ENCODE measurements at regions of chr10 and their contacts with region 1.

Region 1: DNA sequence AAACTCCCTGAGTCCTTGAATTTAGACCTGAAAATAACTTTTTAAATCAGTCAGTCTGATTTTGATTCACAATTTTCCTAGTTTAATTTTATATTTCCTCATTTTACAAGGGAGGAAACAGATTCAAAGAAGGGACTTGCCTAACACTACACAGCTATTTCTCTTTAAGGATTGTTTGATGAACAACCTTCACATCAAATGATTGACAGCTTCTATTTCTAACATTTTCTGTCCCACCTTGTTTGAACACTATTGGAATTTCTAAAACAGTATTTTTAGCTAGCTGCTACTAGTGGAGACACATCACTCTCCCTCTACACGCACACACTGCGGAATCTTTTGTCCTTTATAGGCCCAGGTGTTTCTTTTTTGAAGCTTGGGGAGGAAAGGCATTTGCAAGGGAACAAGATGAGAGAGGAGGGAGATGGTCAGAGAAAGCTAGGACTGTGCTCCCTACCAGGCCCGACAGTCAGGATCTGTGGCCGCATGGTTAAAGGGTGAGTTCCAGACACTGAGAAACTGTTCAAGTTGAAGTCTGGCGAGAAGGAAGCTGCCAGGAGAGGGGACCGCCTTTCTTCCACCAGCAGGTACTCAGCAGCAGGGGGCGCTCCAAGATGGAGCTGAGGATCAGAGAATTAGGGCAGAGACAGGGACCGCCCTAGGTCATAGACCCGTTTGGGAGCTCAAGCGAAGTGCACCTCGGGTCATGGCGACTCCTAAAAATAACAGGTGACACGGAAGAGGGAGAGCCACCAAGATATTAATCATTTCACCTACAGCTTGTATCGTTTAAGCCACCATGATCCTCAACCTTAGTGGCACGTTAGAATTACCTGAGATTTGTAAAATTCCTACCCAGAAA is 49.7 kb downstream of the DNAJC12 start:
- DNase-seq: peak; percentile 65
- H3K4me3 Mint-ChIP-seq: peak overlapping the region; percentile 70
- H3K27ac Mint-ChIP-seq: peak overlapping the region; percentile 89
- H3K4me1 Mint-ChIP-seq: peaks cover 53% of the 10 kb centered on the region
- H3K27me3 Mint-ChIP-seq: no peaks in the 10 kb centered on the region

Region 2: DNA sequence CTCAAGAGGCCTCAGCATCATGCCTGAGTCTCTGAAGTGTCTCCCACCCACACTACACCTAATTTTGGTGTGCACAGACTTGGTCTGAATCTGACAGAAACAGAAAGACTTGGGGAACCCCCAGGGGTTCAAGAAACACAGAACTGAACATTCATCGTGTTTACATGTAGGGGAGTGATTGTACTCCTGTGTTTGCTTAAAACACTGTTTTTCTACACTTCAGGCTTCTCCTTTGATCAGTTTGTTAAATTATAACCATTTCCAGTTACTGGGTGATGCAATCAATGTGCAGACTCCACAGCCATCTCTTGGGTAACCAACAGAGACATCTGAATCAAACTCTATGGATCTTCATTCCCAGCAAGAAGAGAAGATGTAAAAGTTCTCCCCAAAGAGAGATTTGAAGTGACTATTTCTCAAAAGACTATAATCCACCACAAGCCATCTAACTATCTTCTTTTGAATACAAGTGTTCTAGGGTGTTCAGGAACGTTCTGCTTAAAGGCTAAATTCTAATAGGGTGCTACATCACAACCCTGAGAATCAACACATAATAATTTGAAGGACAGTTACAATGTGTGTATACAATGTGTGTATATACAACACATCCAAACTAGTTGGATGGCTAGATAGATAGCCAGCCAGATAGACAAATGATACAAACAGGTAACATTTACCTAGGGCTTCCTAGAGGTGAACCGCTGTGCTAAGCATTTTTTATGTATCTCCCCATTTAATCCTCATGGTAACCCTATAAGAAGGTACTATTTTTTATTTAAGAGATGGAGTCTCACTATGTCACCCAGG is 15.5 kb after region 1 on chr10:
- intact Hi-C with region 1: loop called (anchors 1 kb)
- DNase-seq: no peak
- H3K4me3 Mint-ChIP-seq: no peak overlapping the region
- H3K27ac Mint-ChIP-seq: peak overlapping the region; percentile 78
- H3K4me1 Mint-ChIP-seq: peaks cover 25% of the 10 kb centered on the region
- H3K27me3 Mint-ChIP-seq: no peaks in the 10 kb centered on the region

Region 3: DNA sequence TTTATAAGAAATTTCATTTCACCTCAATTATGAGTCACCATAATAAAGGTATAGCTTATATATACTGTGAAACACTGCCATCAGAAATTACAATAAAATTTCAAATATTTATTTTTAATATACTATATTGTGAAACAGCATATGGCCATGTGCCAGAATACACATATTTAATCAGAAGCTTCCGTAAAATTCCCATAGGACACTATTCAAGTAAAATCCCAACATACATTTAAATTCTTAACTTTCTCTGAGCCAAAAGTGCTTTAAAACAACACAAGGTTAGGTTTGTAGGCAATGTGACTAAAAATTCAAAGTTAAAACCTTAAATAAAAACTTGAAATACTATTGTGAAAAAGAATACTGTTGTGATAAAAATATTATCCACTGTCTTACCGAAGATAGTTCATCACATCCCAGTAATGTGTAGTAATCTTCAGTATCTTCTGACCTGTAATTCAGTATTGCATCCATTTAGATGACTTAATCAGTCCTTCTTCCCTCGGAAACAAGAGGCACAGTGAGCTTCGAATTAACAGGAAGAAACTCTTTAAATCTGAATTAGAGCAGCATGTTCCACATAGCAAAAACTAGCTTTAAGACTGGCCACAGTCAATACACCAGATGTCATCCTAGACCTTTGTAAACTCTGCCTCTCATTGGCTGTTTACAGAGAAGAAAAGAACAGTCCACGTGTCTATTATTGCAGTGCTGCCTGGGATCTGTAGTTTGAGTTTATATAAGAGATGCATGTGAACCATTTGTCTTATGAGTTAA is 49.5 kb after region 1 on chr10 and contains the start of gene DNAJC12:
- intact Hi-C with region 1: loop called (anchors 1 kb)
- DNase-seq: peak; percentile 7
- H3K4me3 Mint-ChIP-seq: peak within 1 kb of the TSS; percentile 84
- H3K27ac Mint-ChIP-seq: peak within 1 kb of the TSS; percentile 42
- H3K4me1 Mint-ChIP-seq: peaks cover 22% of the 10 kb centered on the region
- H3K27me3 Mint-ChIP-seq: no peaks in the 10 kb centered on the region
- total RNA-seq, gene DNAJC12: 25.0 and 27.2 TPM in 2 replicates

Region 4: GRCh38 chr10:67884313-67884841 is 96.1 kb after region 1 on chr10 and contains the start of gene SIRT1:
- intact Hi-C with region 1: loop called (anchors 1 kb)
- DNase-seq: peak; percentile 91
- H3K4me3 Mint-ChIP-seq: peak within 1 kb of the TSS; percentile 91
- H3K27ac Mint-ChIP-seq: peak within 1 kb of the TSS; percentile 87
- H3K4me1 Mint-ChIP-seq: peaks cover 28% of the 10 kb centered on the region
- H3K27me3 Mint-ChIP-seq: peaks cover 4% of the 10 kb centered on the region
- total RNA-seq, gene SIRT1: 27.4 and 29.3 TPM in 2 replicates

Region 5: DNA sequence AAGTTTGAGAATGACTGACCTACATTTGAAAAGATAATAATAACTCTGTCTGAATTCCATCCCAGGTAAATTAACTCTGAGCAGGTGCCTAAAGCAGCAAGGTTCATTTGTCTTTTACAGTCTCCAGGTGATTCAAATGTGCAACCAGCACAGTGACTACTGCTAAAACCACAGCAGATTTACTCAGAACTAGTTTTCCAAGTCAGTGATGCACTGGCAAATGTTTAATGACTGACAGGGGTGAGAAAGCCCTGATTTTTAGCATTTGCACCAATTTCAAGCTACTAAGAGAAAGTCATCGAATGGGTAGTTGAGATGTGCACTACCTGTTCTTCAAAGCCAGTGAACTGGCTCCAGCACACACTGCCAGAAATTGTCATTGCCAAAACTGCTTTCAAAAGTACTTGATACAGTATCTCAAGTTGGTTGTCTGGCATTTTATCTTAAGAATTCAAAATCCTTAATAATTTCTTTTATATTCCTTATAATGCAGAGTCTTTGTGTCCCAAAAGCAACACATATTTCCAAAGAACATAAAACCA is 383.4 kb after region 1 on chr10:
- intact Hi-C with region 1: no loop called
- DNase-seq: no peak
- H3K4me3 Mint-ChIP-seq: no peak overlapping the region
- H3K27ac Mint-ChIP-seq: no peak overlapping the region
- H3K4me1 Mint-ChIP-seq: no peaks in the 10 kb centered on the region
- H3K27me3 Mint-ChIP-seq: peaks cover 4% of the 10 kb centered on the region

Region 6: DNA sequence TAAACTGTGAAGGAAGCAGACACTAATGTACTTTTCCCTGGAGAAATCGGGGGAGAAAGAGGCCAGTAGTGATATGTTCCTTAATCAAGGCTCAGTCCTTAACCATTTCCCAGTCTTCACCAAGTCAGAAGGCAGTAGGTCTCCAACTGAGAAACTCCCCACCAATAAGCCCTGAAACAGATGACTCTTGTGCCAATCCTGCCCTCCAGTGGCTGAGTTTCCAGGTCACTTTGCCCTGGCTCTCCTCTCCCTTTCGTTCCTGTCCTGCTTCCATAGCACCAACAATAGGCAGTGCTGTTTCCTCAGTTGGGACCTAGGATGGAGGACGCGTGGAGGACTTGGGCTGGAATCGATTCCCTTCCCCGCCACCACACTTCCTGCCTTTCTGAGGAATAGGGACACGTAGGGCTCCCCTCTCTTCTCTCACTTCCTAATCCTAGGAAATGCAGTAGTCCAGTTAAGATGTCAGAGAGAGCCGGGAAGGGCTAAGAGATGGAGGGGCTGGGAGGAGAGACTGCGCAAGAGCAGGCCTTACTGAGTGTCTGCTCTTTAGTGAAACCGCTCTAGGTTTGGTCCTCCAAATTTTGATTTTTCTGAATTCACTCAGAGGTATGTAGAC is 420.3 kb after region 1 on chr10:
- intact Hi-C with region 1: loop called (anchors 1 kb)
- DNase-seq: no peak
- H3K4me3 Mint-ChIP-seq: no peak overlapping the region
- H3K27ac Mint-ChIP-seq: no peak overlapping the region
- H3K4me1 Mint-ChIP-seq: no peaks in the 10 kb centered on the region
- H3K27me3 Mint-ChIP-seq: peaks cover 18% of the 10 kb centered on the region